ENCODE measurements at regions of chr6 and their contacts with region 1.

Region 1: DNA sequence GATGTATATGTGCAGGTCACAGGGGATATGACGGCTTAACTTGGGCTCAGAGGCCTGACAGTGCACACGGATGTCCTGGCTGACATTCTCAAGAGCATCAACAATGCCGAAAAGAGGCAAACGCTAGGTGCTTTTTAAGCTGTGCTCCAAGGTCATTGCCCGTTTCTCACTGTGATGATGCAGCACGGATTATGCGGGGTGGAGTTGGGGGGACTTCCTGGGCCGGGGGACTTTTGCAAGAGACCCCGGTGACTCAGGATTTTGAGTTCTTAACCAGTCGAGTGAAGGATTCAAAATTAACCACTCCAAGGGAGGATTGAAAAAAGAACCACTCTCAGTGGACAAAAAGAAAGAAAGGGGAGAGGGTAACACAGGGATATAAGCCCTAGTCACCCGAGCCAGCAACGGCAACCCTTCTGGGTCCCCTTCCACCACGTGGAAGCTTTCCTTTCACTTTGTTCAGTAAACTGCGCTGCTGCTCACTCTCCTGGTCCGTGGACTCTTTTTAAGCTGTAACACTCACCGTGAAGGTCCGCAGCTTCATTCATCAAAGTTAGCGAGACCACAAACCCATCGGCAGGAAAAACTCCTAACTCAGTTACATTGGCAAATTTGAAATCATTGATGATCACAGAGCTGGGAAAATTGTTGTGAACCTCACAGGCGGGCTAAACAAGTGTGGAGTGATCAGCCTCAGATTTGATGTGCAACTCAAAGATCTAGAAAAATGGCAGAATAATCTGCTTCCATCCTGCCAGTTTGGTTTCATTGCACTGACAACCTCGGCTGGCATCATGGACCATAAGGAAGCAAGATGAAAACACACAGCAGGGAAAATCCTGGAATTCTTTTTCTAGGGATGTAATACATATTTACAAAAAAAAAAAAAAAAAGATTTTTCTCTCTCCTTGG is 199.3 kb downstream of the ARID1B start:
- DNase-seq: peak; percentile 68
- H3K4me3 Mint-ChIP-seq: peak overlapping the region; percentile 82
- H3K27ac Mint-ChIP-seq: peak overlapping the region; percentile 86
- H3K4me1 Mint-ChIP-seq: peaks cover 28% of the 10 kb centered on the region
- H3K27me3 Mint-ChIP-seq: no peaks in the 10 kb centered on the region

Region 2: DNA sequence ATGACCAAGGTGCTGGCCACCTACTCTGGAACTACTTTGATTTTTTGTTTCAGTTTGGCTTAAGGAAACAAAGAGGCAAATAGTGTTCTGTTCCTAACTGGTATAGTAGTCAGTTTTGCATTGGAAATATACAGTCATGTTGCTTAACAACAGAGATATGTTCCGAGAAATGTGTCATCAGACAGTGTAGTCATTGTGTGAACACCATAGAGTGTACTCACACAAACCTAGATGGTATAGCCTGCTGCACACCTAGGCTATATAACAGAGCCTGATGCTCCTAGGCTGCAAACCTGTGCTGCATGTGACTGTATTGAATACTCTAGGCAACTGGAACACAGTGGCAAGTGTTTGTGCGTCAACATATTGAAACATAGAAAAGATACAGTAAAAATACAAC is 118.9 kb before region 1 on chr6:
- intact Hi-C with region 1: loop called (anchors 5 kb)
- DNase-seq: no peak
- H3K4me3 Mint-ChIP-seq: no peak overlapping the region
- H3K27ac Mint-ChIP-seq: peak overlapping the region; percentile 92
- H3K4me1 Mint-ChIP-seq: peaks cover 48% of the 10 kb centered on the region
- H3K27me3 Mint-ChIP-seq: no peaks in the 10 kb centered on the region

Region 3: GRCh38 chr6:156933201-156934068 is 43.0 kb before region 1 on chr6:
- intact Hi-C with region 1: loop called (anchors 5 kb)
- DNase-seq: no peak
- H3K4me3 Mint-ChIP-seq: no peak overlapping the region
- H3K27ac Mint-ChIP-seq: no peak overlapping the region
- H3K4me1 Mint-ChIP-seq: peaks cover 27% of the 10 kb centered on the region
- H3K27me3 Mint-ChIP-seq: no peaks in the 10 kb centered on the region

Region 4: DNA sequence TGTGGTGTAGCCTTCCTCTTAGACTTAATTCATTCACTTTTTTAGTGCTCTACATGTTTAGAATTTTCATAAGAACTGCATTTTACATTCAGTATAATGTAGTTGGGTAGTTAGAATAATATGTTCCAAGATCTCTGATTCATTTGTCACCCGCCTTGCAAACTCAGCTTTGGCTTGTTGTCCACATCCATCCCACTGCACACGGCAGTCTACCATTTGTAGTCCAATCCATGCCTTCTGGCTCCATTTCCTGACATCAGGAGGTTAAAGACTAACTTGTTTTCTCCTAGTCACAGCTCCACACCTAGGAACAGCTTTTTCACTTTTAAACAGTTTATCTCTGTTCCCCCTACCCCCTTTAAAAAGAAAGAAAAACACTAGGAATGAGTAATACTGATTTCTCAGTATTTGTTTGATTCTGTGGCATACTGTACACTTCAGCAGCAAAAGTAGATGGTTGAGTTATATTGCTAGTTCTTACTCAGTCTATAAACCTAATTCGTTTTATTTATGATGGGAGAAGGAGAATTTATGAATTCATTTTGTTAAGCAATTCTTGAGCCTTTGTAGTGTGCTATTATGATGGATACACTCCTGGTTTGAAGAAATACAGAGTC is 18.4 kb before region 1 on chr6:
- intact Hi-C with region 1: loop called (anchors 2 kb)
- DNase-seq: no peak
- H3K4me3 Mint-ChIP-seq: no peak overlapping the region
- H3K27ac Mint-ChIP-seq: peak overlapping the region; percentile 72
- H3K4me1 Mint-ChIP-seq: peaks cover 34% of the 10 kb centered on the region
- H3K27me3 Mint-ChIP-seq: no peaks in the 10 kb centered on the region

Region 5: DNA sequence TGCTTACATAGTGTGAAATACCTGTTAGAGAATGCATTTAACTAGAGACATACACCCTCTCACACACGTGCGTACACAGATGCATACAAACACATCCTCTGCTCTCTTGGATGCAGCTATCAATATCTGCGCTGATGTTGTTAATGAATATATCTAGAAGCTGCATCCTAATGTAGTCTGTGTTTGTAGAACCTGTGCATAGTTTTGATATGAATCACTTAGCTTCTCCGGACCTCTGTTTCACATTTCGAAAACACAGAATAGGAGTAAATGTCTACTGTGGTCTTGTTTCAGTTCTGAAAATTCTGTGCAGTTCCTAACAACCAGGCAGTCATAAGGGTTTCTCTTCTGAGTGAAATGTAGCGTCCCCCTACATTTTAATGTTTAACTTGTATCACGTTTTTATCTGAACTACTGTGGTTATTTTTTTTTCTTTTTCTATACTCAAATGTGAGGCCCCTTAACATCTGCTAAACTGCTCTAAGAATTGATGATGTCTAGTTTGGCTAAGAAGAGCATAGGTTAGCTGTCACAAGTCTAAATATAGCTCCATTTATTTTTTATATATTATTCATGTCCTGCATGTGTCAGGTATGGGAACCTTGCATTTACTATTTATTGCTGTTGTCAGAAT is 92.3 kb after region 1 on chr6:
- intact Hi-C with region 1: loop called (anchors 2 kb)
- DNase-seq: peak; percentile 64
- H3K4me3 Mint-ChIP-seq: peak overlapping the region; percentile 53
- H3K27ac Mint-ChIP-seq: peak overlapping the region; percentile 77
- H3K4me1 Mint-ChIP-seq: peaks cover 31% of the 10 kb centered on the region
- H3K27me3 Mint-ChIP-seq: no peaks in the 10 kb centered on the region

Region 6: GRCh38 chr6:157123234-157123633 is 146.8 kb after region 1 on chr6:
- intact Hi-C with region 1: no loop called
- DNase-seq: no peak
- H3K4me3 Mint-ChIP-seq: no peak overlapping the region
- H3K27ac Mint-ChIP-seq: no peak overlapping the region
- H3K4me1 Mint-ChIP-seq: peaks cover 1% of the 10 kb centered on the region
- H3K27me3 Mint-ChIP-seq: no peaks in the 10 kb centered on the region

Region 7: GRCh38 chr6:157374889-157375443 is 398.5 kb after region 1 on chr6:
- intact Hi-C with region 1: no loop called
- DNase-seq: no peak
- H3K4me3 Mint-ChIP-seq: no peak overlapping the region
- H3K27ac Mint-ChIP-seq: no peak overlapping the region
- H3K4me1 Mint-ChIP-seq: peaks cover 19% of the 10 kb centered on the region
- H3K27me3 Mint-ChIP-seq: peaks cover 37% of the 10 kb centered on the region

Region 8: DNA sequence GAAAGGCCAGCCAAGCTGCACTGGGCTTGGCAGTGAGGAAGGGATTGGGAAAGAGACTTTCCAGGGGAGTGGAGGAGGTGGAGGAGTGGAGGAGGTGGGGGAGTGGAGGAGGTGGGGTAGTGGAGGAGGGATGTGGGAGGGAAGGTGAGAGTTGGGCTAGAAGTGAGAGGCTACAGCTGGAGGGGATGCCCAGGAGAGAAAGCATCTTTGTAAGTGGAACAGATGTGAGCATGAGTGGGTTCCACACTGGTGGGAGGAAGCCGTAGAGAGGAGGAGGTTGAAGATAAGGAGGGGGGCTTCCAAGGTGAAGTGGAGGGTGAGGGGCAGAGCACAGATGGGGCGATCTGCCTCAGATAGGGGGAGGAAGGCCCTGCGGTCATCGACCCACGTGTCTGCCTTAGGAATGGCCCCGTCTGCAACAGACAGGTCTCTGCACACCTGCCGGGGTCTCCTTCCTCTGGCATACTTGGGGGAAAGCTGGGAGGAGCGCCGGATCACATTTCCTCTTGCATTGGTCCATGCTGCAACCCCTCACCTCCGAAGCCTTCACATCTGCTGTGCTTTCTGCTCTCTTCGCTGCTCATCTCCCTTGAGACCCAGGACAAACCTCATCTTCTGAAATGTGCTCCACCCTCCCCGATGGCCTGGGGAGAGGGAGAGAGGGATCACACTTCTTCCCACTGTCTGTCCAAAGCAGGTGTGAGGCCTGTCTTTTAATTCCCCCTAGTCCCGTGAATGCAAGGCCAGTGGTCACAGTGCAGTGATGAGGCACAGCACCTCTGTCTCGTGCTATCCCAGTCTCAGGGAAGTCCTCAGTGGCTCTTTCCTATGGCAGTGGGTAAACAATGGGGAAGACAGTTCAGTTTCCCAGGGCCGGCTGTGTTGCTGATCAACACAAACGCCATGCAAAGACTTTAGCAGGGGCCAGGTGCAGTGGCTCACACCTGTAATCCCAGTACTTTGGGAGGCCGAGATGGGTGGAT is 798.0 kb after region 1 on chr6:
- intact Hi-C with region 1: no loop called
- DNase-seq: no peak
- H3K4me3 Mint-ChIP-seq: no peak overlapping the region
- H3K27ac Mint-ChIP-seq: peak overlapping the region; percentile 73
- H3K4me1 Mint-ChIP-seq: peaks cover 12% of the 10 kb centered on the region
- H3K27me3 Mint-ChIP-seq: peaks cover 41% of the 10 kb centered on the region

Measured in activated CD4-positive, alpha-beta T cell treated with anti-CD3 and anti-CD28 coated beads, Interleukin-2, amount 10 ng/mL, durations not matched to agents 24 days and 14 days (primary cell).